Breast epithelium (tissue), 4 donors: ENCODE measurements at regions of chr5 and their contacts with region 1.

Region 1: DNA sequence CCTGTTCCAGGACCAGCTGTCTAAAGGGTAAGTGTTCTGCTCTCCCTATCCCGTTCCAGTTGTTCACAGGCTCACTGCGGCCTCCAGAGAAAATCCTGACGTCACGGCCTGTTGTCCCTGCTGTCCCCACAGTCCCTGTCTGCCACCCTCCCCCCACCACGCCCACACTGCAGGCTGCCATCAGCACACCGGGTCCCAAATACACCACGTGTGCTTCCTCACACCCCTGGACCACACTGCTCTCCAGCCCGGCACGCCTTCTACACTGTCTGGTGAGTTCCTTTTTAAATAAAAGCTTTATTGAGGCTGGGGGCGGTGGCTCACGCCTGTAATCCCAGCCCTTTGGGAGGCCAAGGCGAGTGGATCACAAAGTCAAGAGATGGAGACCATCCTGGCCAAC is 88.3 kb upstream of the RUFY1 start:
- DNase-seq: no peak
- H3K4me3 ChIP-seq: no peak overlapping the region
- H3K27ac ChIP-seq: no peak overlapping the region
- H3K4me1 ChIP-seq: no peaks in the 10 kb centered on the region
- H3K27me3 ChIP-seq: no peaks in the 10 kb centered on the region
- CTCF ChIP-seq: no peak
- POLR2A ChIP-seq: no peak

Region 2: GRCh38 chr5:179008661-179009060 is 453.4 kb before region 1 on chr5:
- intact Hi-C with region 1: loop called (anchors 5 kb)
- DNase-seq: no peak
- H3K4me3 ChIP-seq: no peak overlapping the region
- H3K27ac ChIP-seq: no peak overlapping the region
- H3K4me1 ChIP-seq: no peaks in the 10 kb centered on the region
- H3K27me3 ChIP-seq: no peaks in the 10 kb centered on the region
- CTCF ChIP-seq: no peak
- POLR2A ChIP-seq: no peak

Region 3: GRCh38 chr5:179404321-179405053 is 57.6 kb before region 1 on chr5:
- intact Hi-C with region 1: no loop called
- DNase-seq: no peak
- H3K4me3 ChIP-seq: no peak overlapping the region
- H3K27ac ChIP-seq: no peak overlapping the region
- H3K4me1 ChIP-seq: no peaks in the 10 kb centered on the region
- H3K27me3 ChIP-seq: no peaks in the 10 kb centered on the region
- CTCF ChIP-seq: no peak
- POLR2A ChIP-seq: no peak